Endothelial cell of umbilical vein (primary cell): ENCODE measurements at regions of chr9 and their contacts with region 1.

Region 1: DNA sequence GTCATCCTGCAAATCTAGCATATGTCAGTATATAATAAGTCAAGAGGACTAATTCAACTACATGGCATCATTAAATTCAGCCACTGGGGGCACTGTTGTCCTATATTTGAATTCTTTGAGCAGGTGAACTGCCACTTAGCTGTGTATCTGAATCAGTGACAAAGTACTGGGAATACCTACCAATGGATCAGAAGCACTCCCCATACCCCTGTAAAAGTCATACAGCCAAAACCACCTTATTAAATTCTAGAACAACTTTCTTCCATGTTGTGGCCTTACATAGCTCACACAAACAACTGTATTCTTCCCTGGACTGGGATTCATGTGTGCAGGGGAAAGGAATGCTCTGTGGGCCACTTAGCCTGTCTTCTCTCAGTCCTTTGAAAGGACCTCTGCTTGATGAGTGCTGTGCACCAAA is 57.4 kb upstream of the PLPP6 start:
- DNase-seq: peak; percentile 83
- H3K4me3 ChIP-seq: no peak overlapping the region
- H3K27ac ChIP-seq: no peak overlapping the region
- H3K4me1 ChIP-seq: no peaks in the 10 kb centered on the region
- H3K27me3 ChIP-seq: no peaks in the 10 kb centered on the region
- CTCF ChIP-seq: peak; percentile 57 to 61
- POLR2A ChIP-seq: no peak

Region 2: DNA sequence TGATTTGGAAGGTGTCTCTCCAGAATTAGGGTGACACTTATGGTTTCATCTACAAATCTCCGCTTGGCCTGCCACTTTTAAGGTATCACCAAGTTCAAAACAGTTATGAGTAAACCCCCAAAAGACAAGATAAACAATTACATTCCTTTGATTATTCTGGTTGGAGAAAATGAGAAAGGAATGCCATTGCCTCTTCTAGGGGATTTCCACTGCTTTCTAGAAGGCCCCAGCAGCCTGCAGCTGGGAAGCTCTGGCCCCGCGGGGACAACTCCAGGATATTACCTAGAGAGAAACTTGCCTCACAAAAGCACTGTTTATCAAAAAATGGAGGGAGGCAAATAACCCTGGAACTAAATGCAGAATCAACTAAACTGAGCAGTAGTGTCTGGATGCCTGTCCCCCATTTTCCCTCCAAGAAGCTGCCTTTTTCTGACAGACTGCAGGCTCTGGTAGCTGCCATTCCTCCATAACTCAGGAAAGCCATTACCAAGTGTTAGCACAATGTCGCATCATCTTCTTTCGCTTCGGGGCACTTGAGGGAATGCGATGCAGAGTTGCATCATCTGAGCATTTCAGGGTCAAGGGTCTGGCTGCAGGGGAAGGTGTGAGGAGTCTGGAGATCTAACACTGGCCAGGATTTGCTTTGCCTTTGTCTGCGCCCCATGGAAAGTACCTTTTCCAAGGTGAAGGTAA is 14.1 kb before region 1 on chr9:
- CTCF ChIA-PET with region 1: interaction called, 13 read pairs
- POLR2A ChIA-PET with region 1: no interaction called
- dilution Hi-C with region 1: no loop called
- intact Hi-C with region 1: no loop called
- DNase-seq: no peak
- H3K4me3 ChIP-seq: no peak overlapping the region
- H3K27ac ChIP-seq: no peak overlapping the region
- H3K4me1 ChIP-seq: peaks cover 2% of the 10 kb centered on the region
- H3K27me3 ChIP-seq: no peaks in the 10 kb centered on the region
- CTCF ChIP-seq: no peak
- POLR2A ChIP-seq: no peak

Region 3: GRCh38 chr9:4615251-4615650 is 10.6 kb after region 1 on chr9:
- CTCF ChIA-PET with region 1: interaction called, 11 read pairs
- POLR2A ChIA-PET with region 1: no interaction called
- dilution Hi-C with region 1: no loop called
- intact Hi-C with region 1: no loop called
- DNase-seq: no peak
- H3K4me3 ChIP-seq: no peak overlapping the region
- H3K27ac ChIP-seq: no peak overlapping the region
- H3K4me1 ChIP-seq: peaks cover 4% of the 10 kb centered on the region
- H3K27me3 ChIP-seq: peaks cover 0 to 1% of the 10 kb centered on the region in 2 experiments
- CTCF ChIP-seq: no peak
- POLR2A ChIP-seq: no peak